Activated T-helper 1 cell treated with anti-CD3 and anti-CD28 coated beads, Interleukin-12 subunit alpha, Interleukin-12 subunit beta, Interleukin-2, Interleukin-4 antibody, amounts not matched to agents 30 ng/mL and 10 ng/mL and 1 ng/mL, durations not matched to agents 14 hours and 24 hours and 36 hours (primary cell): ENCODE measurements at regions of chrX and their contacts with region 1.

Region 1: DNA sequence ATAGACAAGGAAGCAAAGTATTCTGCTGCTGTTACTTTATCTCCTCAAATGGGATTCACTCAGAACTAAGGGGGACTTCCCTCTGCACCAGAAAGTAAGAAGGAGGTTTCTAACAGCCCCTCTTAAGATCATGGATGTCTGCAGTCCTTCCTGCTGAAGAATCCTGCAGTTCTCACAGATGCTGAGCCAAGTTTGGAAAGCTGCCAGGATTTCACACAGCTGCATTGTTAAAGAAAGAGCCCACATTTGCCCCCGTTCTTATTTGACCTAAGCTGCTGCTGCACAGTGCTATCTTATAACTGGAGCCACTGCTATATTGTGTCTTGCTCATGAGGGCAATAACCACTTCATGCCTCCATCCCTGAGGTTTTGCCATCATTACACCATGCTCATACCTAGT is 81.1 kb downstream of the FAAH2 start:
- DNase-seq: no peak
- H3K4me3 Mint-ChIP-seq: no peak overlapping the region
- H3K27ac Mint-ChIP-seq: no peak overlapping the region
- H3K4me1 Mint-ChIP-seq: peaks cover 20% of the 10 kb centered on the region
- H3K27me3 Mint-ChIP-seq: no peaks in the 10 kb centered on the region

Region 2: DNA sequence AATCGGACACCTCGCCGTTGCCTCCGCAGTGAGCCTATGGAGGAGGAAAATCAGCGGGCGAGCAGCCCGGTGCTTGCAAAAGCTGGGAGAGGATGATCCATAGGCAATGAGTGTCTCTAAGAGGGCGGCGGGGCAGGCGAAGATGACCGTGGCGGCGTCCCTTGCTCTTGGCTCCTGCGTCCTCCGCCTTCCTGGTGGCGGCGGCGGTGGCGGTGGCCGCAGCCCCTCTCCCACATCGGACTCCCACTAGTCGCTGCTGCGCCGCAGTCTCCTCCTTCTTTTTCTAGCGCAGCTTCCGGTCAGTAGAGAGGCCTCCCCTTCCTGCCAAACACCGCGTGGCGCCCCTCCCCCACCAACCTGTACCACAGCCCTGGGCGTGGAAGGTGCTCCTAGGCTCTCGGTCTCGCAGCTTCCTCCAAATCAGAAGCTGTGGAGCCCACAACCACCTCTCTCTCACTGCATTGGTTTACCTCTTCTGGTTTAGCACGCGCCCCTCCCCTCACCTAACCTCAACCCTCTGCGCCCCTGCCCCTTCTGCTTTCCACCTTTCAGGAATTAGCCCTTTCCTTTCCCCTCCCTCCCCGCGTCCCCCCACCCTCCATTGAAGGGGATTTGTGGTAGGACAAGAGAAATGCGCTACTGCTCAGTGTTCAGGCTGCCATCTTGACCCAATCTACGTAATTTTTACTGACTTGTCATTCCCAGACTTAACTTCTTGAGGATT is 372.2 kb before region 1 on chrX and contains the start of gene SPIN3:
- intact Hi-C with region 1: no loop called
- DNase-seq: peak; percentile 42
- H3K4me3 Mint-ChIP-seq: peak within 1 kb of the TSS; percentile 90
- H3K27ac Mint-ChIP-seq: peak within 1 kb of the TSS; percentile 83
- H3K4me1 Mint-ChIP-seq: peaks cover 18% of the 10 kb centered on the region
- H3K27me3 Mint-ChIP-seq: no peaks in the 10 kb centered on the region
- total RNA-seq, gene SPIN3: 9.4 and 9.6 TPM in 2 replicates

Region 3: DNA sequence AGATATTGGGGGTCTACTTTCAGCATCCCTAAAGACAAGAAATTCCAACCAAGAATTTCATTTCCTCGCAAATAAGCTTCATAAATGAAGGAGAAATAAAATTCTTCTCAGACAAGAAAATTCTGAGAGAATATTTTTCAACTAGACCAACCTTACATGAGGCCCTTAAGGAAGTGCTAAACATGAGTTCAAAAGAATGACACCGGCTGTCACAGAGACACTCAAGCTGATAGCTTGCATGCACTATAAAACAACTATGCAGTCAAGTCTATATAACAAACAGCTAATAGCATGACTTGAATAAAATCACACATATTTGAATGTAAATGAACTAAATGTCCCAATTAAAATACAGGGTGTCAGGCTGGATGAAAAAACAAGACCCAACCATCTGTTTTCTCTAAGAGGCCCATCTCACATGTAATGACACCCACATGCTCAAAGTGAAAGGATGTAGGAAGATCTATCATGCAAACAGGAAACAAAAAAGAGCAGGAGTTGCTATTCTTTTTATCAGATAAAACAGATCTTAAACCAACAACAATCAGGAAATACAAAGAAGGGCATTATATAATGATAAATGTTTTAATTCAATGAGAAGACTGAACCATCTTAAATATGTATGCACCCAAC is 54.0 kb before region 1 on chrX:
- intact Hi-C with region 1: loop called (anchors 10 kb)
- DNase-seq: no peak
- H3K4me3 Mint-ChIP-seq: no peak overlapping the region
- H3K27ac Mint-ChIP-seq: peak overlapping the region; percentile 37
- H3K4me1 Mint-ChIP-seq: peaks cover 14% of the 10 kb centered on the region
- H3K27me3 Mint-ChIP-seq: no peaks in the 10 kb centered on the region

Region 4: DNA sequence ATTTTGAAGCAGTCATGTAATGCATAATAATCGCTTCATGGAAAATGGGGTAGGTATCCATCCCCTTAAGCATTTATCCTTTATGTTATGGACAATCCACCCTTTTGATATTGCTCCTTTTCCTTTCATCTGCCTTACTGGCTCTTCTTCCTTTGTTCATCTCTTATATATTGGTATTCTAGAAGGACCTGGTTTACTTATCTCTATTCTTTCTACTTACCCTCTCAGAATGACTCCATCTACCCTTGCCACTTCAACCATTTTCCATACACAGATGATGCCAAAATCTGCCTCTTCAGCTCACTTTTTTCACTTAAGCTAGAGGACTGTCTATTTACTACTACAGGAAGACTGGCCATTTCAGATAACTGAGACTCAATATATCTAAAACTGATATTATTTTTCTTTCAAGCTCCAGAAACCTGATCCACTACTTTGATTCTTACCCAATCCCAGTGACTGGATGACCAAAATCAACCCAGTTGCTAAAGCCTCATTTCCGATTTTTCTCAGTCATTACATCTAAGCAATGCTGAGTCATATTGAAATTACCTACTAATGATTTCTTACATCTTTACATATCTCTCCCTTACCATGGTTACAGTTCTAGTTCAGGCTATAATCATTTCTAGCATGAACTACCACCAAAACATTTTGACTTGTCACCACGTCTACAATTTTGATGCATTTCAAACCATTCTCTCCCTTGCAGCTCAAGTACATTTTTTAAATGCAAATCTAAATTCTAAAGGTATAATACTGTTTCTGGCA is 12.6 kb after region 1 on chrX:
- intact Hi-C with region 1: loop called (anchors 1 kb)
- DNase-seq: no peak
- H3K4me3 Mint-ChIP-seq: no peak overlapping the region
- H3K27ac Mint-ChIP-seq: peak overlapping the region; percentile 85
- H3K4me1 Mint-ChIP-seq: peaks cover 16% of the 10 kb centered on the region
- H3K27me3 Mint-ChIP-seq: no peaks in the 10 kb centered on the region